WTC11 (cell line): ENCODE measurements at regions of chr12 and their contacts with region 1.

Region 1: GRCh38 chr12:4857472-4858291 is 52.0 kb upstream of the KCNA1 start:
- DNase-seq: peak; percentile 78
- ATAC-seq: peak; percentile 25
- H3K4me3 Mint-ChIP-seq: peak overlapping the region; percentile 28
- H3K27ac Mint-ChIP-seq: no peak overlapping the region
- H3K4me1 Mint-ChIP-seq: peaks cover 16% of the 10 kb centered on the region
- H3K27me3 Mint-ChIP-seq: peaks cover 34% of the 10 kb centered on the region
- CTCF ChIP-seq: peak; percentile 60

Region 2: GRCh38 chr12:4615667-4616066 is 242.0 kb before region 1 on chr12:
- CTCF ChIA-PET with region 1: no interaction called
- POLR2A ChIA-PET with region 1: no interaction called
- DNase-seq: no peak
- ATAC-seq: peak; percentile 26; the same call in 1 of the 2 replicates
- H3K4me3 Mint-ChIP-seq: no peak overlapping the region
- H3K27ac Mint-ChIP-seq: no peak overlapping the region
- H3K4me1 Mint-ChIP-seq: no peaks in the 10 kb centered on the region
- H3K27me3 Mint-ChIP-seq: no peaks in the 10 kb centered on the region
- CTCF ChIP-seq: no peak

Region 3: GRCh38 chr12:4908684-4909409 is 51.2 kb after region 1 on chr12:
- CTCF ChIA-PET with region 1: interaction called, 37 read pairs
- POLR2A ChIA-PET with region 1: no interaction called
- DNase-seq: peak; percentile 85
- ATAC-seq: peak; percentile 96
- H3K4me3 Mint-ChIP-seq: peak overlapping the region; percentile 78
- H3K27ac Mint-ChIP-seq: no peak overlapping the region
- H3K4me1 Mint-ChIP-seq: peaks cover 13% of the 10 kb centered on the region
- H3K27me3 Mint-ChIP-seq: peaks cover 1% of the 10 kb centered on the region; the same call in 1 of the 2 replicates
- CTCF ChIP-seq: no peak

Region 4: DNA sequence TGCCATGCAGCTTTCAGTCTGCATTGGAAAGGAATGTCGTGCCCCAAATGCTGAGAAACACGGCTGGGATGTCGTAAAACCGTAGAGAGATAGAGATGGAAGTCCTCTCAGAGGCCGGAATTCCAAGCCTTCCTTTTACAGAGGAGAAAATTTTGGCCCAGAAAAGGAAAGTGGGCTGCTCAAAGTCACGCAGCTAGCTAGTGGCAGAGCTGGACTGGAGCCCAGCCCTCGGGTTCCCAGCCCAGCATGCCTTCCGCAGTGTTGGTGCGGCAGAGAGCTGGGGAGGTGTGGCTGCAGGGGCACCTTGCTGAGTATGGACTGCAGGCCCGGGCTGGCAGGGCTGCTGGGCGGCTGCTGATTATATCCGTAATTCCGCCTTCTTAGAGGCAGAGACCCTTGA is 102.3 kb after region 1 on chr12:
- CTCF ChIA-PET with region 1: interaction called, 10 read pairs
- POLR2A ChIA-PET with region 1: no interaction called
- DNase-seq: no peak
- ATAC-seq: peak; percentile 44; the same call in 1 of the 2 replicates
- H3K4me3 Mint-ChIP-seq: no peak overlapping the region
- H3K27ac Mint-ChIP-seq: no peak overlapping the region
- H3K4me1 Mint-ChIP-seq: peaks cover 6% of the 10 kb centered on the region
- H3K27me3 Mint-ChIP-seq: peaks cover 12% of the 10 kb centered on the region
- CTCF ChIP-seq: no peak

Region 5: DNA sequence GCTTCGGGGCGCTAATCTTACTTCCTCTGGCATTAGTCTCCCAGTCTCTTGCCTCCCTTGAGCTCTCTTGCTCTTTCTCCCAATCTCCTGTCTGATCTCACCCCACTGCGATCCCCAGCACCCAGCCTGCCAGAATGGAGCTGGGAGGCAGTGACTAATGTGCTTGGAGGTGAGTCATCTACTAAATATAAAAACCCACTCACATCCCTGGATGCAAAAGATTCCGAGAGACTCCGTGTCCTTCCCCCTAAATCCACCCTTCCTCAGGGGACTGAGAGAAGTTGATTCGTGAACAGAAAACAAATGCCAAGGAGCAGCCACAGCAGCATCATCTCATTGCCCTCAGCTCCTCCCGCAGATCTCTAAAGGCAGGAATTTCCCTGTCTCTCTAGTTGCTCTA is 140.3 kb after region 1 on chr12:
- CTCF ChIA-PET with region 1: interaction called, 43 read pairs
- POLR2A ChIA-PET with region 1: no interaction called
- DNase-seq: no peak
- ATAC-seq: no peak
- H3K4me3 Mint-ChIP-seq: no peak overlapping the region
- H3K27ac Mint-ChIP-seq: no peak overlapping the region
- H3K4me1 Mint-ChIP-seq: peaks cover 8% of the 10 kb centered on the region
- H3K27me3 Mint-ChIP-seq: no peaks in the 10 kb centered on the region; the same call in 1 of the 2 replicates
- CTCF ChIP-seq: no peak

Region 6: GRCh38 chr12:5068126-5068525 is 210.4 kb after region 1 on chr12:
- CTCF ChIA-PET with region 1: interaction called, 15 read pairs
- POLR2A ChIA-PET with region 1: no interaction called
- DNase-seq: no peak
- ATAC-seq: no peak
- H3K4me3 Mint-ChIP-seq: no peak overlapping the region
- H3K27ac Mint-ChIP-seq: no peak overlapping the region
- H3K4me1 Mint-ChIP-seq: peaks cover 12% of the 10 kb centered on the region
- H3K27me3 Mint-ChIP-seq: peaks cover 8% of the 10 kb centered on the region
- CTCF ChIP-seq: no peak